ENCODE measurements at regions of chr12 and their contacts with region 1.

Region 1: DNA sequence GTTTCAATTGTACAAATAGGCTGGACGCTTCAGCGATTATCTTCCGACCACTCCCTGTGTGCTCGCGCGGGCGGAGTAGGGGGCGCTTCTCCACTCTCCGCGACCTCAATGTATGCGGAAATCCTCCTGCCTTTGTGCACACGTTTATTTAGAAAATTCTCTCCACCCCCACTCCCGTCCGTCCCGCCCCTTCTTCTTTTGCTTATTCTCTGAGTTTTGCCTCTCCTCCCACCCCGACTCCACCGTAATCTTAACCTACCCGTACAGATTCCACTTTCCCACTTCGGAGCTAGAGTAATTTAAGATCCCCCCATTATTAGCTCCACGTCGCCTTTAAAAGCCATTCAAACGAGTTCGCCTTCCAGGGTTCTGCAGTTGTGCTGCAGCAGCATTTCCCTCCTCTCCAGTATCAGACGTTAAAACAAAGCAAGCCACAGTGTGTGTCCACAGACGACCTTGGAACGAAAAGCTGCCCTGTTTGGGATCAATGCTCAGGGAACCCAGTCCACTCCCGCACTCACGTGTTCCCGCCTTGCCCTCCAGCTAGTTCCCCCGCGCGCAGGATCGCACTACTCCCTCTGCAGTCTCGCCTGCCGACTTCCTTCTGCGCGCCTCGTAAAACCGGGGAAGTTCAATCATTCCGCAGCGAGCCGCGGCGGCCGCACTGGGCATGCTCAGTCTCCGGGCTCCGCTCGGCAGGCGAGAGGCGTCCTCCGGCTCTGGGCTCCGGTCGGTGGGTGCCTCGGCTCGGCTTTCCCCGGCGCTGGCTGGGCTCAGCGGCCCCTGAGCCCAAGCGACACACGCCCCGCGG is at the start of gene ANO6:
- DNase-seq: peak; percentile 73
- H3K4me3 Mint-ChIP-seq: peak within 1 kb of the TSS; percentile 86
- H3K27ac Mint-ChIP-seq: peak within 1 kb of the TSS; percentile 73
- H3K4me1 Mint-ChIP-seq: no peaks in the 10 kb centered on the region
- H3K27me3 Mint-ChIP-seq: no peaks in the 10 kb centered on the region
- CTCF ChIP-seq: no peak
- total RNA-seq, gene ANO6: 28.8 and 34.2 TPM in 2 replicates

Region 2: DNA sequence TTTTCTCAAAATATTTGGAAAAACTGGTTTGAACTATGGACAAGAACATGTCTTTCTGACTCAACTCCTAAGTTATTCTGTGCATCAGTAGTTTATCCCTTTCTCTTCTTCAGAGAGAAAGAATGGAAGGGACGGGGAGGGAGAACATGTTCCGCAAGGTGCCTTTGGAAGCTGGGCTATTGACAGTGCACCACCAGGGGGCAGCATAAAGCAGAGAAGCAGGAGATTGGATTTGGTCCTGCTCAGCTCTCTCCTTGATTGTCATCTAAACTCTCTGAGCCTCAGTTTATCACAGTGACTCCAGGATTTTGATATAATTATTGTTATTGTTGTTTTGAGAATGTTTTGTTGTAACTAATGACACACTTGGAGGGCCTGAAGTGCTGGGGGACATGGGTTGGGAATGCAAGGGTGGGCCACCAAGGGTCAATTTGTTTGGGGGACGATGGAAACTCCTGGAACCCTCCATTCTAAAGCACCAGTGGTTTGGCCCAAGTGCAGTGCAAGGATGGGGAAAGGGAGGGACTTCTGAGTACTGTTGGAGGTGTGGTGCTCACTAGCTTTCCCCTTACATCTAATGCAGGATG is 45.1 kb before region 1 on chr12:
- CTCF ChIA-PET with region 1: interaction called, 4 read pairs
- intact Hi-C with region 1: loop called (anchors 5 kb)
- DNase-seq: peak; percentile 85
- H3K4me3 Mint-ChIP-seq: no peak overlapping the region
- H3K27ac Mint-ChIP-seq: no peak overlapping the region
- H3K4me1 Mint-ChIP-seq: no peaks in the 10 kb centered on the region
- H3K27me3 Mint-ChIP-seq: no peaks in the 10 kb centered on the region
- CTCF ChIP-seq: peak; percentile 78

Region 3: DNA sequence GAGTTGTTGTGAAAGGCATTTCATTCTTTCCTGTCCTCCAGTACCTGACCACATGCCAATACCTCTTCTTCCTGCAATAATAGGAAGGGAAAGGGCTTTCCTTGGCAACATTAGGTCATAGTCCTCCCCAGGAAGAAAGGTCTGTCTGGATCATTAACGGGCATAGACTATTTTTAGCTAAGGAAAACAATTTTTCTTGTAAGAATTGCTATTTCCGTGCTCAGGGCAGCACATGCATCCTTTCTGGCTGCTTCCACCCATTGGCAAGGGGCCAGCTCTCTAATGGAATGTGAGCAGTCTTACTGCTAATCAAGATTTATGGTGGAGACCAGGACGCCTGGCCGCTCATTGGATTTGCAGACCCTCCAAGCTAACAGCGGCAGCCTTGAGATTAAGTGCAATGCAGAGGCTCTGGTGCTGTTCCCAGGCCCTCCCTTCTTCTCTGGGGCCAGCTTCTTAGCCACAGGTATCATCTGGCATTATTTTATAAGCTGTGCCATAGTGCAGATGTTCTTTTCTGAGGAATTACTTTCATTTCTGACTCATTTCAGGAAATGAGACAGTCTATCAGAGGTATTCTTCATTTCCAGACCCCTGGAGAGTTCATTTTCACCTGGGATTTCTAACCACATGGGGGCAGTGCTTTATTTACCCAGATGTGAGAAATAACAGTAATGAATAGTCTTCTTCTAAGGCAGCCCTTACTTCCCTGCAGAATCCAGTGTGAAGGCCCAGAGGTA is 53.2 kb after region 1 on chr12:
- CTCF ChIA-PET with region 1: interaction called, 8 read pairs
- intact Hi-C with region 1: loop called (anchors 1 kb)
- DNase-seq: peak; percentile 76
- H3K4me3 Mint-ChIP-seq: peak overlapping the region; percentile 26
- H3K27ac Mint-ChIP-seq: peak overlapping the region; percentile 50
- H3K4me1 Mint-ChIP-seq: peaks cover 31% of the 10 kb centered on the region
- H3K27me3 Mint-ChIP-seq: no peaks in the 10 kb centered on the region
- CTCF ChIP-seq: no peak

Region 4: DNA sequence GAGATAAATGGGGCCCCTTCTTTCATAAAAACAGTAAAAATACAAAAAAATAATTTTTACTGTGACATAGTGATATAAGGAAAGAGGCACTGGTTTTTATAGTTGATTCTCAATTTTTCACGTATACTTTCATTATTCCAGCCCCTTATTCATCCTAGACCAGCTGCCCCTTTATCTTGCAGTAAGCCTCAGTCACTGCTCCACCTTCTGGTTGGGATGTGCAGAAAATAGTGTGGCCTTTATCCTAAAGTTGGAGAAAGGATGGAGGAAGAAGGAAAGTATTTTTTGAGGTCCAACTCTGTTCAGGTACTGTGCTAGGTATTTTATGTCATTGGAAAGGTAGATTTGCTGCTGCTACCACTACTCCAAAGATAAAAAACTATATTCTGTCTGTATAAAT is 172.9 kb after region 1 on chr12:
- CTCF ChIA-PET with region 1: no interaction called
- intact Hi-C with region 1: loop called (anchors 1 kb)
- DNase-seq: peak; percentile 8
- H3K4me3 Mint-ChIP-seq: no peak overlapping the region
- H3K27ac Mint-ChIP-seq: no peak overlapping the region
- H3K4me1 Mint-ChIP-seq: no peaks in the 10 kb centered on the region
- H3K27me3 Mint-ChIP-seq: no peaks in the 10 kb centered on the region
- CTCF ChIP-seq: no peak